CD8-positive, alpha-beta T cell (primary cell): ENCODE measurements at regions of chr12 and their contacts with region 1.

Region 1: GRCh38 chr12:27382171-27382795 is 49.6 kb downstream of the BMAL2 start:
- DNase-seq: no peak
- ATAC-seq: no peak
- H3K4me3 ChIP-seq: no peak overlapping the region
- H3K4me3 Mint-ChIP-seq: no peak overlapping the region
- H3K27ac ChIP-seq: no peak overlapping the region
- H3K27ac Mint-ChIP-seq: no peak overlapping the region
- H3K4me1 ChIP-seq: no peaks in the 10 kb centered on the region
- H3K4me1 Mint-ChIP-seq: no peaks in the 10 kb centered on the region
- H3K27me3 ChIP-seq: no peaks in the 10 kb centered on the region
- H3K27me3 Mint-ChIP-seq: no peaks in the 10 kb centered on the region
- CTCF ChIP-seq: no peak

Region 2: DNA sequence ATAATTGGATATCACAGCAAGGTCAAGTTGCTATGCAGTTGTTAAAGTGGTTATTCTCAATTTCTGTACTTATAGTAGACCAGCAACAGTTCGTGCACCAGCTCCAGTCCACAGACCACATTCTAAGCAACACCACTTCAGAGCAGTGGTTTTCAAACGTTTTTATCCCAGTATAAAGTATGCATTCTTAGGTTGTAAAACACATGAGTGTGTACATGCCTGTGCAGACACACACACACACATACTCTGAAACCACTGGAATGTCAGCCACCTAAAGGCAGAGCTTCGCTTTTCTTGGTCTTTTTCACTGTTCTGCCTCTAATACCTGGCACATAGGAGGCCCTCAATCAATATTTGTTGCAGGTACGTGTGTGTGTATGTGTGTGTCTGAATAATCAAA is 277.7 kb before region 1 on chr12:
- CTCF ChIA-PET with region 1: no interaction called
- POLR2A ChIA-PET with region 1: no interaction called
- intact Hi-C with region 1: no loop called
- DNase-seq: no peak
- ATAC-seq: no peak
- H3K4me3 ChIP-seq: no peak overlapping the region
- H3K4me3 Mint-ChIP-seq: no peak overlapping the region
- H3K27ac ChIP-seq: no peak overlapping the region
- H3K27ac Mint-ChIP-seq: no peak overlapping the region
- H3K4me1 ChIP-seq: no peaks in the 10 kb centered on the region
- H3K4me1 Mint-ChIP-seq: no peaks in the 10 kb centered on the region
- H3K27me3 ChIP-seq: no peaks in the 10 kb centered on the region
- H3K27me3 Mint-ChIP-seq: no peaks in the 10 kb centered on the region
- CTCF ChIP-seq: no peak

Region 3: DNA sequence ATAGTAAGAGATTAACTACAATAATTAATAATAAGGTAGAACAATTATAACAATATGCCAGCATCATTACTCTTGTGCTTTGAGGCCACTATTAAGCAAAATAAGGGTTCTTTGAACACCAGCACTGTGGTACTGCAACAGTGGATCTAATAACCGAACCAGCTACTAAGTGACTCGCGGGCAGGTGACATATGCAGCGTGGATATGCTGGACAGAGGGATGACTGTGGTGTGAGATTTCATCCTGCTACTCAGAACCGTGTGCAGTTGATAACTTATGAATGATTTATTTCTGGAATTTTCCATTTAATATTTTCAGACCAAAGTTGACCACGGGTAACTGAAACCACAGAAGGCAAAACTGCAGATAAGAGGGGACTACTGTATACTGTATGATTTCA is 15.2 kb before region 1 on chr12:
- CTCF ChIA-PET with region 1: interaction called, 11 read pairs
- POLR2A ChIA-PET with region 1: no interaction called
- intact Hi-C with region 1: no loop called
- DNase-seq: no peak
- ATAC-seq: no peak
- H3K4me3 ChIP-seq: no peak overlapping the region
- H3K4me3 Mint-ChIP-seq: no peak overlapping the region
- H3K27ac ChIP-seq: no peak overlapping the region
- H3K27ac Mint-ChIP-seq: no peak overlapping the region
- H3K4me1 ChIP-seq: no peaks in the 10 kb centered on the region
- H3K4me1 Mint-ChIP-seq: no peaks in the 10 kb centered on the region
- H3K27me3 ChIP-seq: no peaks in the 10 kb centered on the region
- H3K27me3 Mint-ChIP-seq: peaks cover 16% of the 10 kb centered on the region
- CTCF ChIP-seq: no peak

Region 4: DNA sequence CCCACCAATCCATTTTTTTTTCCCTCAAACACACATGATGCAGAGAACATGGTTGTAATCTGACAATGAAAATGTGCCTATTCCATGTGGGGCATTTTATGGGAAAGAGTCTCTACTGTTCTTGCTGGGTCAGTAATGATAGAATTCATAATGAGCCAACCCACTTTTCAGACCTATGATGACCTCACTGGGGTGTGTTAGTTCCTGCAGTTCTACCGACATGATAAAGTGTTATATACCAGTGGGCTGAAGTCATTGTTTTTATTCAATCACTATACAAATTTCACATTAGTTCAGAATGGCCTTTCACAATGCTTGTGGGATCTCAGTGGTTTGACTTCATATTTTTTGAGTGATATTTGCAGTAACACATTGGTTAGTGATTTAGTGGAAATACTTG is 189.2 kb after region 1 on chr12:
- CTCF ChIA-PET with region 1: no interaction called
- POLR2A ChIA-PET with region 1: no interaction called
- intact Hi-C with region 1: no loop called
- DNase-seq: no peak
- ATAC-seq: no peak
- H3K4me3 ChIP-seq: no peak overlapping the region
- H3K4me3 Mint-ChIP-seq: no peak overlapping the region
- H3K27ac ChIP-seq: no peak overlapping the region
- H3K27ac Mint-ChIP-seq: no peak overlapping the region
- H3K4me1 ChIP-seq: no peaks in the 10 kb centered on the region
- H3K4me1 Mint-ChIP-seq: peaks cover 5% of the 10 kb centered on the region
- H3K27me3 ChIP-seq: no peaks in the 10 kb centered on the region
- H3K27me3 Mint-ChIP-seq: no peaks in the 10 kb centered on the region
- CTCF ChIP-seq: no peak

Region 5: GRCh38 chr12:27966870-27967269 is 584.6 kb after region 1 on chr12:
- CTCF ChIA-PET with region 1: no interaction called
- POLR2A ChIA-PET with region 1: no interaction called
- intact Hi-C with region 1: no loop called
- DNase-seq: no peak
- ATAC-seq: no peak
- H3K4me3 ChIP-seq: no peak overlapping the region
- H3K4me3 Mint-ChIP-seq: no peak overlapping the region
- H3K27ac ChIP-seq: no peak overlapping the region
- H3K27ac Mint-ChIP-seq: no peak overlapping the region
- H3K4me1 ChIP-seq: peaks cover 17% of the 10 kb centered on the region
- H3K4me1 Mint-ChIP-seq: peaks cover 25% of the 10 kb centered on the region
- H3K27me3 ChIP-seq: peaks cover 24 to 33% of the 10 kb centered on the region in 2 experiments
- H3K27me3 Mint-ChIP-seq: peaks cover 66% of the 10 kb centered on the region
- CTCF ChIP-seq: no peak

Region 6: GRCh38 chr12:28083840-28084678 is 701.8 kb after region 1 on chr12:
- CTCF ChIA-PET with region 1: no interaction called
- POLR2A ChIA-PET with region 1: no interaction called
- intact Hi-C with region 1: no loop called
- DNase-seq: no peak
- ATAC-seq: no peak
- H3K4me3 ChIP-seq: no peak overlapping the region
- H3K4me3 Mint-ChIP-seq: no peak overlapping the region
- H3K27ac ChIP-seq: no peak overlapping the region
- H3K27ac Mint-ChIP-seq: no peak overlapping the region
- H3K4me1 ChIP-seq: no peaks in the 10 kb centered on the region
- H3K4me1 Mint-ChIP-seq: no peaks in the 10 kb centered on the region
- H3K27me3 ChIP-seq: no peaks in the 10 kb centered on the region
- H3K27me3 Mint-ChIP-seq: peaks cover 14% of the 10 kb centered on the region
- CTCF ChIP-seq: no peak